HepG2 (cell line): ENCODE measurements at regions of chr19 and their contacts with region 1.

Region 1: DNA sequence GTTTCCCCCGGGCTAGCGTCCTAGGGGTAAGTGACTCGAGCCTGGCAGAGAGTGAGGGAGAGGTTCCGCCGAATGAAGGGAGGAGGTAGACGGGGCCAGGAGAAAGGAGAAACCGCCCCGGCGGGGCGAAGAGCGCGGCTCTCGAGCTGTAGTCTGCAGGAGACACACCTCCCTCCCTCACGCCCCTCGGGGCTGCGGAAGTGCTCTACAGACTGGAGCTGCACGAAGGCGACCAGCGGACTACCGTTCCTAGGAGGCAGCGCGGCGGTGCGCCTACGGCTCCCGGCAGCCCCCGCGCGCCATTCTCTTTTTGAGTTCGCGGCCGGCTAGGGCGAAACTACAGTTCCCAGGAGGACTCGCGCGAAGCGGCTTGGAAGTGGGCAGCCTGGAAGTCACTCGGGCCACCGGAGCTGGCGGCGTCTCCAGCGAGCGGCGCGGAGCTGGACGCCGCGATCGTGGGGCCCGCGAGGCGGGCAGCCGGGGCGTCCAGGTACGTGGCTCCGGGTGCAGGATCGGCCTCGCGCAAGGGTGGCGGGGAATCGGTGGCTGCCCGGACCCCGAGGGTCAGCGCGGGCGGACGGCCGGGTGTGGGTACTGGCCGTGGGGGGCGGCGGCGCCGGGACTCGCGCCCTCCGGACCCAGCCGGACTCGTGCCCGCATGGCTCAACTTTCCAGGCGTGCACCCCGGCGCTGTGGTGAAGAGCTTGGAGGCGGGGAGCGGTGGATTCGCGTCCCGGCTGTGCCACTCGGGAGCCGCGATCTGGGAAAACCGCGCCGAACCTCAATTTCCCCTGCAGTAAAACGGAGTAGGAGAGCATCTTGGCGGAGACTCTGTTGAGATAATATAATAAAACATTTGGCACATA is at the start of gene SIPA1L3:
- DNase-seq: peak; percentile 91
- ATAC-seq: peak; percentile 97
- H3K4me3 ChIP-seq: peak within 1 kb of the TSS; percentile 85 to 91 (median 86)
- H3K27ac ChIP-seq: peak within 1 kb of the TSS; percentile 79
- H3K4me1 ChIP-seq: peaks cover 33% of the 10 kb centered on the region
- H3K27me3 ChIP-seq: no peaks in the 10 kb centered on the region
- CTCF ChIP-seq: 0 out of 2 replicates have a peak, but pooled peaks have one; percentile 23
- EP300 ChIP-seq: no peak
- POLR2A ChIP-seq: peak; percentile 76 to 83
- RAD21 ChIP-seq: no peak
- total RNA-seq, gene SIPA1L3: 6.9 and 7.7 TPM in 2 replicates

Region 2: DNA sequence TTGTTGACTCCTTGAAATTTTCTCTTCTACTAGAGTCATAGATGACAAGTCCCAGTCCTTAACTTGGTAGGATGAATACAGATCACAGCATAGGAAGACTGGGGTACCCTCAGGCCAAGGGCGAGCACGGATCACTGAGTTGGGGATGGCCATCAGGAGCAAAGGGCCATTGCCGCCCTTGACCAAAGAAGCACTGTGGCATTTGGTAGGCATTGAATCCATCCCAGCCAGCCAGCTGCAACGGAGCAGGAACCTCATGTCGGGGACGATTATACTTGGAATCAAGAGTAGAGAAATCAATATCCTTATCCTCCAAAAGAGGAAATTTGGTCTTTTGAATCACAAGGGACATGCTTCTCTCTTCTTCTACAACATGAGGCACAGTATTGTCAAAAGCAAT is 77.6 kb before region 1 on chr19:
- CTCF ChIA-PET with region 1: no interaction called
- POLR2A ChIA-PET with region 1: no interaction called
- in situ Hi-C with region 1: no loop called
- intact Hi-C with region 1: no loop called
- DNase-seq: no peak
- ATAC-seq: no peak
- H3K4me3 ChIP-seq: no peak overlapping the region
- H3K27ac ChIP-seq: no peak overlapping the region
- H3K4me1 ChIP-seq: no peaks in the 10 kb centered on the region
- H3K27me3 ChIP-seq: no peaks in the 10 kb centered on the region
- CTCF ChIP-seq: no peak
- EP300 ChIP-seq: no peak
- POLR2A ChIP-seq: no peak
- RAD21 ChIP-seq: no peak

Region 3: GRCh38 chr19:37931881-37932655 is 25.0 kb after region 1 on chr19:
- CTCF ChIA-PET with region 1: no interaction called
- POLR2A ChIA-PET with region 1: interaction called, 89 read pairs
- in situ Hi-C with region 1: no loop called
- intact Hi-C with region 1: loop called (anchors 2 kb)
- DNase-seq: peak; percentile 84
- ATAC-seq: peak; percentile 85
- H3K4me3 ChIP-seq: peak overlapping the region; percentile 57 to 75 (median 68); a peak in 5 of 6 replicates
- H3K27ac ChIP-seq: peak overlapping the region; percentile 87
- H3K4me1 ChIP-seq: peaks cover 69% of the 10 kb centered on the region
- H3K27me3 ChIP-seq: no peaks in the 10 kb centered on the region
- CTCF ChIP-seq: peak; percentile 27; the same call in 1 of the 2 replicates
- EP300 ChIP-seq: 0 out of 4 replicates have a peak, but pooled peaks of 1 of the 2 experiments have one; percentile 46
- POLR2A ChIP-seq: peak; percentile 47 to 79; a peak in 3 of 4 replicates
- RAD21 ChIP-seq: no peak

Region 4: GRCh38 chr19:37941782-37942515 is 34.8 kb after region 1 on chr19:
- CTCF ChIA-PET with region 1: no interaction called
- POLR2A ChIA-PET with region 1: interaction called, 4 read pairs
- in situ Hi-C with region 1: no loop called
- intact Hi-C with region 1: loop called (anchors 2 kb)
- DNase-seq: peak; percentile 57
- ATAC-seq: peak; percentile 56
- H3K4me3 ChIP-seq: no peak overlapping the region
- H3K27ac ChIP-seq: peak overlapping the region; percentile 30
- H3K4me1 ChIP-seq: peaks cover 35% of the 10 kb centered on the region
- H3K27me3 ChIP-seq: no peaks in the 10 kb centered on the region; a peak in 1 of 5 replicates
- CTCF ChIP-seq: no peak
- EP300 ChIP-seq: no peak
- POLR2A ChIP-seq: no peak
- RAD21 ChIP-seq: no peak

Region 5: DNA sequence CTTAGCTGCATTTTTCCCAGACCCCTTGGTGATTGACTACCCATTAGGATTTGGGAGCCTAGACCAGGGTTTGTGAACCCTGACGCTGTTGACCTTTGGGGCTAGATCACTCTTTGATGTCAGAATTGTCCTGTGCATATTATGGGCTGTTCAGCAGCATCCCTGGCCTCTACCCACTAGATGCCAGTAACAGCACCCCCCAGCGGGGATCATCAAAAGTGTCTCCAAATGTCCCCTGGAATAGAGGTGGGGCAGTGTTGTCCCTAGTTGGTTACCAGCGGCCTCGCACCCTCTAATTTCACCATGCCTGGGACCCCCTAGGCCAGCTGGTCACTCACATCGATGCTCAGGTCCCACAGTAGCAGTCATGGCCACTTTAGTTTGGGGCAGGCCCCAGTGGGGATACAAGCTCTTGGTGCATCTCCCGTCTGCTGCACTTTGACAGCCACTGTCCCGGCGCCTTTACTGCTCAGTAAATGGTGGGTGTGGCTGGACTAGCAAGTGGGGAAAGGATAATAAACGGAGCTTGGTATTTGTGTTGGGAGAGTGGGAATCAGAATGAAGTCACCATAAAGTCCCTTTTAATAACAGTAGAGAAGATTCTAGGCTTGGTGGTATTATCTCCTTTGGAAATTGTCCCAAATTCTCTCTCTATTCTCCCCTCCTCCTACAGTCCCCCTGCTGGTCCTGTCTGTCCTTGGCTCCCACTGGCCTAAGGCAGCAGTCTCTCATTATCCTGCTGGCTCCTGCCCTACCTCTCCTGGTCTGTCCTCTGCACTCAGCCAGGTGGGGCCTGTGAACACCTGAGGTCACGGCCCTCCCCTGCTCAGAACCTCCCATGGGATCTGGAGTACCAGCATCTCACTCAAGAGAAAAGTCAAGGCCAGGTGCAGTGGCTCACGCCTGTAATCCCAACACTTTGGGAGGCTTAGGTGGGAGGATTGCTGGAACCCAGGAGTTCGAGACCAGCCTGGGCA is 80.5 kb after region 1 on chr19:
- CTCF ChIA-PET with region 1: interaction called, 10 read pairs
- POLR2A ChIA-PET with region 1: no interaction called
- in situ Hi-C with region 1: loop called (anchors 5 kb)
- intact Hi-C with region 1: loop called (anchors 2 kb)
- DNase-seq: peak; percentile 21
- ATAC-seq: peak; percentile 56
- H3K4me3 ChIP-seq: no peak overlapping the region
- H3K27ac ChIP-seq: no peak overlapping the region
- H3K4me1 ChIP-seq: peaks cover 38% of the 10 kb centered on the region
- H3K27me3 ChIP-seq: no peaks in the 10 kb centered on the region
- CTCF ChIP-seq: peak; percentile 46
- EP300 ChIP-seq: no peak
- POLR2A ChIP-seq: no peak
- RAD21 ChIP-seq: peak; percentile 44; the same call in 1 of the 2 replicates

Region 6: DNA sequence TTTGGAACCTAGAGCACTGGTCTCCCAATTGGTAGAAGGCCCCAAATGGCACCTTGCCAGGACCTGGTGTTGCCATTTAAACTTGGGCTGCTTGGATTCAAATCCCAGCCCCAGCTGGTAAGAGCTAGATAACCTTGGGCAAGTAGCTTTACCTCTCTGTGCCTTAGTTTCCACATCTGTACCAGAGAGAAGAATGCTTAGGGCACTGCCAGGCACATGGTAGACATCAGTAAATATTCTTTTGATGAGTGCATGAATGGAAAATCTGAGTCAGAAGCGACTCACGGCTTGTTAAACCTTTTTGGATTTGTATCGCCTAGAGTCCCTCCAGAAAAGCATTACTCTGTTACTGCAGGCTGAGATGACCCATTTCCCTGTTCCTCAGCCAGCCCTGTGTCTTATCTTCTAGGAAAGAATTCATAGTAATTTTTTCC is 90.8 kb after region 1 on chr19:
- CTCF ChIA-PET with region 1: no interaction called
- POLR2A ChIA-PET with region 1: no interaction called
- in situ Hi-C with region 1: no loop called
- intact Hi-C with region 1: no loop called
- DNase-seq: no peak
- ATAC-seq: no peak
- H3K4me3 ChIP-seq: no peak overlapping the region
- H3K27ac ChIP-seq: no peak overlapping the region
- H3K4me1 ChIP-seq: peaks cover 9% of the 10 kb centered on the region; the same call in 1 of the 2 replicates
- H3K27me3 ChIP-seq: no peaks in the 10 kb centered on the region
- CTCF ChIP-seq: no peak
- EP300 ChIP-seq: no peak
- POLR2A ChIP-seq: no peak
- RAD21 ChIP-seq: no peak

Region 7: GRCh38 chr19:38073841-38074685 is 167.0 kb after region 1 on chr19:
- CTCF ChIA-PET with region 1: interaction called, 16 read pairs
- POLR2A ChIA-PET with region 1: interaction called, 4 read pairs
- in situ Hi-C with region 1: loop called (anchors 5 kb)
- intact Hi-C with region 1: loop called (anchors 1 kb)
- DNase-seq: peak; percentile 67
- ATAC-seq: peak; percentile 100
- H3K4me3 ChIP-seq: no peak overlapping the region
- H3K27ac ChIP-seq: peak overlapping the region; percentile 50
- H3K4me1 ChIP-seq: peaks cover 22% of the 10 kb centered on the region
- H3K27me3 ChIP-seq: no peaks in the 10 kb centered on the region
- CTCF ChIP-seq: peak; percentile 96
- EP300 ChIP-seq: no peak
- POLR2A ChIP-seq: no peak
- RAD21 ChIP-seq: peak; percentile 91